RWPE1 (cell line): ENCODE measurements at regions of chr3 and their contacts with region 1.

Region 1: DNA sequence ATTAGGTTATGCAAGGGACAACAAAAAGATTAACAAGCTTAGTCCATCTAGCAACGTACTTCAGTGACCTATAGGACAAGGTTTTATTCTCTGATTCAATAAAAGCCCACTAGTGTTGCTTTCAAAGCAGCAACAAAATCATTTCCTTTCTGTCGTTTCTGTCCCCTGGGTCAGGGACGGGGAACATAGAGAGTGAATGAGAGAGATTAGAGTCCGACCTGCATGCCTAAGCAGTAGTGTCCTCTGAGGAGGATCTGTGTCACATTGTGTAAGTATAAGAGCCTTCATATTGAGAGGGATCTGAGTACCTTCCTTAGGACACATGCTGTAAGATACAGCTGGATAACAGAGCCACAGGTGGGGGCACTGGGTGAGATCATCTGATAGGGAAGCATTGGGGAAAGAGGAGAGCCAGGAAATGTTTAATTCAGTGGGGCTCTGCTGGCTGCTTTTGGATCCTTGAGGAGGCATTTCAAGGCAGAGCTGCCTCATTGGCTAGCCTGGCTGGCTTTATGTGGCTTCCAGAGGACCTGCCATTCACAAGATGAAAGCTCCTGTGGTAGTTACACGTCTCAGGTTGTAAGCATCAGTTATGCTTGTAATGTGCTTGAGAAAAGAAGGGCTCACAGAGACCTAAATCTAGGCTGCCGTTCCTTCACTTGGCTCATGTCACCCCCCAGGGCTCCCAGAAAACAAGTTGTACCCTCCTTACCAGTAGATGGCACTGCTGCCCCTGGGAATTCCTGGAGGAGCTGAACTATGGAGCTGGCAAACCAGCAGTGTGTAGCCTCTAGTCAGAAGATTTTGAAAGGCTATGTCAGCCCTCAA is 2.7 kb downstream of the TMEM108 start:
- DNase-seq: peak; percentile 80
- H3K27ac ChIP-seq: no peak overlapping the region
- CTCF ChIP-seq: peak; percentile 76

Region 2: GRCh38 chr3:132730891-132731580 is 309.9 kb before region 1 on chr3:
- CTCF ChIA-PET with region 1: interaction called, 12 read pairs
- POLR2A ChIA-PET with region 1: no interaction called
- DNase-seq: peak; percentile 34
- H3K27ac ChIP-seq: no peak overlapping the region
- CTCF ChIP-seq: peak; percentile 36